ENCODE measurements at regions of chr12 and their contacts with region 1.

Region 1: GRCh38 chr12:127559349-127560040 is 707.5 kb upstream of the TMEM132C start:
- DNase-seq: peak; percentile 81
- H3K4me3 Mint-ChIP-seq: peak overlapping the region; percentile 70
- H3K27ac Mint-ChIP-seq: peak overlapping the region; percentile 96
- H3K4me1 Mint-ChIP-seq: peaks cover 65% of the 10 kb centered on the region
- H3K27me3 Mint-ChIP-seq: no peaks in the 10 kb centered on the region

Region 2: DNA sequence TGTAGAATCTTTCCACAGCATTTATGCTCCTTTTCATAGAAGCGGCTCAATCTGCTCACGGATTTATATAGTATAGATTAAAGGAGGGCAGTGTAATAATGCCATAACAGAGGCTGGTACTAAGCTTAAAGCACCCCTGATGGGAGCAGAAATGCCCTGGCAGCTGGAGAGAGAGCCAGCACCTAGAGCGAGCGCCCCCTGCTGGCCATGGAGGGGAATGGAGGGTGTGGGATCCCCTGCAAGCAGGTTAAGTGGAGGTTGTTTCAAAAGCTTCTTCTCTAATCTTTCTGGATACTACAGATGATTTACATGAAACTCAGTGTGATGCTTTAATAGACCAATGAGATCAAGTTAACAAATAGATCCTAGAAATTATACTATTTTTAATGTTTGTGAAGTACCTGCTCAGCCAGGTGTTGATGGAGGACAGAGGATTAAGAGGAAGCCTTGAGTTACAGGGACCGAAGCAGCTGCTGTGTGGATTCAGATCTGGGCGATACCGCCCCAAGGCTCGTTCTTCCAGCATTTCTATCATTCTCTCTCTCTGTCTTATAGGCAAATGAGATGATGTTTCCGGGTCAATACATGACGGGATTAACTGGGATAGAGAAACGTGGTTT is 811.9 kb before region 1 on chr12:
- intact Hi-C with region 1: no loop called
- DNase-seq: peak; percentile 14
- H3K4me3 Mint-ChIP-seq: no peak overlapping the region
- H3K27ac Mint-ChIP-seq: no peak overlapping the region
- H3K4me1 Mint-ChIP-seq: no peaks in the 10 kb centered on the region
- H3K27me3 Mint-ChIP-seq: peaks cover 6% of the 10 kb centered on the region

Region 3: GRCh38 chr12:126772171-126772864 is 787.2 kb before region 1 on chr12:
- intact Hi-C with region 1: loop called (anchors 5 kb)
- DNase-seq: peak; percentile 20
- H3K4me3 Mint-ChIP-seq: peak overlapping the region; percentile 85
- H3K27ac Mint-ChIP-seq: peak overlapping the region; percentile 97
- H3K4me1 Mint-ChIP-seq: peaks cover 15% of the 10 kb centered on the region
- H3K27me3 Mint-ChIP-seq: no peaks in the 10 kb centered on the region

Region 4: DNA sequence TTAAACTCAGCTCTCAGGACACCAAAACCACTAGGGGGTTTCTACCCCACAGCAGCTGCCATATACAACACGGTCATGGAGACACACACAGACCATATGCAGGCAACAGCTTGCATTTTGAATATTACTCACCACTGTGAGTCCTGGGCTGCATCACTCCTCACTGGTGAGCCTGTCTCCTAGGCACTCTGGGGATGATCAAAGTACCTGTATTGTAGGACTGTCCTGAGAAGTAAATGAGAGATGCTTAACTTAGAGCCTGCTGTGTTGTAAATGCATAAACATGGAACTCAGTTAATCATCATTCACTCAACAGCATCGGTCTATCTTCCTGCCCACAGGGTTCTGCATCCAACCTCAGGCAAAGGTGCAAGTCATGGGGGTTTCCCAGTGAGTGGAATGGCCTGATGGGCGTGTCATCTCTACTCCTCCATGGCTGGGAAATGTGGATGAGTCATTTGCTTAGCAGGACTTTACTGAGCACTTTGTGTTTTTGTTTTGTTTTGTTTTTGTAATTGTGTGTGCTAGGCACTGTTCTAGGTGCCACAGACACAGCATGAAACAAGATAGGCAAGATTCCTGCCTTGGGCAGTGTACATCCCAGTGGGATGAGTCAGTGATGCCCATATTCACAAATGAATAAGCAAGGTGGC is 433.8 kb before region 1 on chr12:
- intact Hi-C with region 1: loop called (anchors 1 kb)
- DNase-seq: peak; percentile 57
- H3K4me3 Mint-ChIP-seq: no peak overlapping the region
- H3K27ac Mint-ChIP-seq: peak overlapping the region; percentile 80
- H3K4me1 Mint-ChIP-seq: peaks cover 18% of the 10 kb centered on the region
- H3K27me3 Mint-ChIP-seq: no peaks in the 10 kb centered on the region

Region 5: DNA sequence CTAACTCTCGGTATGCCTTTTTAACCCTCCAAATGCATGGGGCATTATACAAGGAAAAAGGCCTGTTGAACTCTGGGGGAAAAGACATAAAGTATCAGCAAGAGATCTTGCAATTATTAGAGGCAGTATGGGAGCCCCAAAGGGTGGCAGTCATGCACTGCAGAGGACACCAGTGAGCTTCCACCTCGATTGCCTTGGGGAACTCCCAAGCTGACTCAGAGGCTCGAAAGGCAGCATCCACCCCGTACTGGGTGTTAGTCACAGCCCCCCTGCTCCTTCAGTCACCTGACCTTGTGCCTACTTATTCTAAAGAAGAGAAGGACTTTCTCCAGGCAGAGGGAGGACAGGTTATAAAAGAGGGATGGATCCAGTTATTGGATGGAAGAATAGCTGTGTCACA is 74.0 kb before region 1 on chr12:
- intact Hi-C with region 1: loop called (anchors 1 kb)
- DNase-seq: peak; percentile 48
- H3K4me3 Mint-ChIP-seq: no peak overlapping the region
- H3K27ac Mint-ChIP-seq: no peak overlapping the region
- H3K4me1 Mint-ChIP-seq: peaks cover 14% of the 10 kb centered on the region
- H3K27me3 Mint-ChIP-seq: no peaks in the 10 kb centered on the region

Region 6: DNA sequence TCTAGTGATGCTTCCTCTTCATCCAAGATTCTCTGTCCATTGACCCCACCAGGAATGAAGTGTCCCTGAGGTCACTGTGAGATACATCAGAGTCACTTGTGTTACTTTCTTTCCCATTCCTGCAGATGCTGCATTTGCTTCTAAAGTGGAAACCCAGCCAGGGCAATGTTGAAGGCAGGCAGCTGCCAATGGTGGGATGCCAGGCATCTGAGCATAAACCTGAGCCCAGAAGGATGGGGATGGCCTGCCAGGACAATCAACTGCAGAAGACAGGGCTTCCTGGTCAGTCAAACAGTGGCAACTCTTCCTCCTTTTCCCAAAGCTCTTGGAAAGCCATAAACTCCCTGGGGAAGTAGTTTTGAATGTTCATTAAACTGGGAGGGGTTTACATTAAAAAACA is 529.4 kb after region 1 on chr12:
- intact Hi-C with region 1: loop called (anchors 5 kb)
- DNase-seq: no peak
- H3K4me3 Mint-ChIP-seq: no peak overlapping the region
- H3K27ac Mint-ChIP-seq: no peak overlapping the region
- H3K4me1 Mint-ChIP-seq: no peaks in the 10 kb centered on the region
- H3K27me3 Mint-ChIP-seq: no peaks in the 10 kb centered on the region

Measured in activated T-helper 1 cell treated with anti-CD3 and anti-CD28 coated beads, Interleukin-12 subunit alpha, Interleukin-12 subunit beta, Interleukin-2, Interleukin-4 antibody, amounts not matched to agents 30 ng/mL and 10 ng/mL and 1 ng/mL, durations not matched to agents 14 hours and 24 hours and 36 hours (primary cell).